ENCODE measurements at regions of chr4 and their contacts with region 1.

Region 1: DNA sequence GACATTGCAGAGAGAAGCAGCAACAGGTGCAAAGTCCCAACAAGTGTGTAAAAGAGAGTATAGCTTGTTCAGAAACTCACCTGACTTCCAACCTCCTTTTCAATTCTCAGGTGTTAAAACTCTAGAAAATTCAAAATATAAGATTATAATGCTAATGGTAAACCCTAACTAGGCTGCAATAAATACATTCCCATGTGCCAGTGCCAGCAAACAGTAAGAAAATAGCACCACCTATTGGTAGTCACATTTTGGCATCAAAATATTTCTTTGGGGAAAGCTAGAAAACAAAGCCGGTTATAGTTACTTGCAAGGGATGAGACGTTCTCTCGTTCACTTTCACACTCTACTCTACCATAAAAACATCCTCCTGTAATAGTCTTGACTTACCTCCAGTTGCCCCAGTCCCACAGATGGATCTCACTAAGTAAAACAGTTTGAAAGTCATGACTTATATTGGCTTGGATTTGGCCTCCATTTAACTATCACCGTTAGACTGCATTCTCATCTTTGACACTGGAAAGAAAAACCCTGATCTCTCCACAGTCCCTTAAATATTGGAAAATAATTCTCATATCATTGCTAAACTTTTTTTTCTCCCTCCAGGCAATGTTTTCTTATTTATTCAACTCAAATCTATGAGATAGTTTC is 9.6 kb downstream of the BMP3 start:
- DNase-seq: no peak
- ATAC-seq: no peak
- H3K4me3 Mint-ChIP-seq: no peak overlapping the region
- H3K27ac Mint-ChIP-seq: no peak overlapping the region
- H3K4me1 Mint-ChIP-seq: no peaks in the 10 kb centered on the region
- H3K27me3 Mint-ChIP-seq: peaks cover 14% of the 10 kb centered on the region

Region 2: DNA sequence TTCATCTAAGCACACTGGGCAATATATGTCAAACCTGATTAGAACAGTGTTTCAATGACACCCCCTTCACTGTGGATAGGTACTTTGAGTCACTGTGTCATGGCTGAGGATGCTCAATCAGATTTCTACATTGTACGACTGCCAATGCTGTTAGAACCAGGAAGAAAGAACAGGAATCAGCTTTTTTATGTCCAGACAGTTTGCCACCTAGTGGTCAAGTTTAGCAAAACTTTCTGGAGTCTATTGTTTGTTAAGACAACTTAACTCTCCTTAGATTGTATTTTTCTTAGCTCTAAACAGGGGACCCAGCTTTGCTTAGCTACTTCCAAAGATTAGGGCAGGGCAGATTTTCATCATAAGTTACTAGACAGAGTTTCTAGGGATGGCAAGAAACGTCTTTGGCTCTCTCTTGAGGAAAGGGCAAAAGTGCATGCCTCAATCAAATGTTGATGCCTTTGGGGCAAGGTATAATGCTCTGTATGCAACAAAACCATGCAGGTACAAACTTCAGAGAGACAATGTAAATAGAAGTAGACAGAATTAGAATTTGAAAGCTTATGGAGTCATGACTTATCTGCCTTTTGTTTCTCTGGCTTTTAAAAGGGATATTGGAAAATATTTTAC is 50.1 kb before region 1 on chr4:
- CTCF ChIA-PET with region 1: interaction called, 10 read pairs
- POLR2A ChIA-PET with region 1: no interaction called
- intact Hi-C with region 1: no loop called
- DNase-seq: no peak
- ATAC-seq: peak; percentile 49
- H3K4me3 Mint-ChIP-seq: no peak overlapping the region
- H3K27ac Mint-ChIP-seq: no peak overlapping the region
- H3K4me1 Mint-ChIP-seq: no peaks in the 10 kb centered on the region
- H3K27me3 Mint-ChIP-seq: peaks cover 4% of the 10 kb centered on the region

Region 3: GRCh38 chr4:81304871-81305270 is 264.7 kb after region 1 on chr4:
- CTCF ChIA-PET with region 1: no interaction called
- POLR2A ChIA-PET with region 1: no interaction called
- intact Hi-C with region 1: no loop called
- DNase-seq: no peak
- ATAC-seq: no peak
- H3K4me3 Mint-ChIP-seq: no peak overlapping the region
- H3K27ac Mint-ChIP-seq: no peak overlapping the region
- H3K4me1 Mint-ChIP-seq: no peaks in the 10 kb centered on the region
- H3K27me3 Mint-ChIP-seq: peaks cover 6% of the 10 kb centered on the region

Region 4: DNA sequence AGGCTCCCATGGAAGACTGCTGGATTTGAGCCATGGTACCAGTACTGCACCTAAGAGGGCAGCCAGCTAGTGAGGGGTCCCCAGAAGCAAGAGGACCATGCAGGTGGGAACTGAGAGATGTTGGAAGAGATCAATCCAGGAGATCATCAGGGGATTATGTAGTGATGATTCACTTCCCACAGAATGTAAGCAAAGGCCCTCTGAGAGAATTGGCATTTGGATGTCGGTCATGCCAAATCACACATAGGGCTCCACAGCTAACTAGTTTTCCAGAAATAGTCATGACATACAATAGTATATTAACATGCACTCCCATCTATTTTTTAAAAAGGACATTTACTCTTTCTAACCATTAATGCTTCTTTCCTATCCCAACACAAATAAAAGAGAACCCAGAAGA is 319.1 kb after region 1 on chr4:
- CTCF ChIA-PET with region 1: no interaction called
- POLR2A ChIA-PET with region 1: no interaction called
- intact Hi-C with region 1: no loop called
- DNase-seq: no peak
- ATAC-seq: no peak
- H3K4me3 Mint-ChIP-seq: no peak overlapping the region
- H3K27ac Mint-ChIP-seq: no peak overlapping the region
- H3K4me1 Mint-ChIP-seq: no peaks in the 10 kb centered on the region
- H3K27me3 Mint-ChIP-seq: peaks cover 7% of the 10 kb centered on the region

Region 5: GRCh38 chr4:81454499-81454898 is 414.4 kb after region 1 on chr4:
- CTCF ChIA-PET with region 1: no interaction called
- POLR2A ChIA-PET with region 1: no interaction called
- intact Hi-C with region 1: no loop called
- DNase-seq: peak; percentile 74
- ATAC-seq: peak; percentile 96
- H3K4me3 Mint-ChIP-seq: no peak overlapping the region
- H3K27ac Mint-ChIP-seq: peak overlapping the region; percentile 56
- H3K4me1 Mint-ChIP-seq: peaks cover 18% of the 10 kb centered on the region
- H3K27me3 Mint-ChIP-seq: no peaks in the 10 kb centered on the region

Measured in activated CD4-positive, alpha-beta T cell treated with anti-CD3 and anti-CD28 coated beads for 36 hours (primary cell).